ENCODE measurements at regions of chr15 and their contacts with region 1.

Region 1: GRCh38 chr15:42137431-42138261 is 18.8 kb downstream of the PLA2G4F start:
- DNase-seq: peak; percentile 56 to 68
- H3K4me3 ChIP-seq: no peak overlapping the region
- H3K4me1 ChIP-seq: no peaks in the 10 kb centered on the region
- H3K27me3 ChIP-seq: no peaks in the 10 kb centered on the region

Region 2: GRCh38 chr15:41989934-41990605 is 147.6 kb before region 1 on chr15:
- in situ Hi-C with region 1: loop called (anchors 10 kb)
- DNase-seq: no peak
- H3K4me3 ChIP-seq: no peak overlapping the region
- H3K4me1 ChIP-seq: no peaks in the 10 kb centered on the region
- H3K27me3 ChIP-seq: no peaks in the 10 kb centered on the region